Activated B cell treated with CpG ODN at 0.5 μM for 24 hours (primary cell): ENCODE measurements at regions of chr14 and their contacts with region 1.

Region 1: DNA sequence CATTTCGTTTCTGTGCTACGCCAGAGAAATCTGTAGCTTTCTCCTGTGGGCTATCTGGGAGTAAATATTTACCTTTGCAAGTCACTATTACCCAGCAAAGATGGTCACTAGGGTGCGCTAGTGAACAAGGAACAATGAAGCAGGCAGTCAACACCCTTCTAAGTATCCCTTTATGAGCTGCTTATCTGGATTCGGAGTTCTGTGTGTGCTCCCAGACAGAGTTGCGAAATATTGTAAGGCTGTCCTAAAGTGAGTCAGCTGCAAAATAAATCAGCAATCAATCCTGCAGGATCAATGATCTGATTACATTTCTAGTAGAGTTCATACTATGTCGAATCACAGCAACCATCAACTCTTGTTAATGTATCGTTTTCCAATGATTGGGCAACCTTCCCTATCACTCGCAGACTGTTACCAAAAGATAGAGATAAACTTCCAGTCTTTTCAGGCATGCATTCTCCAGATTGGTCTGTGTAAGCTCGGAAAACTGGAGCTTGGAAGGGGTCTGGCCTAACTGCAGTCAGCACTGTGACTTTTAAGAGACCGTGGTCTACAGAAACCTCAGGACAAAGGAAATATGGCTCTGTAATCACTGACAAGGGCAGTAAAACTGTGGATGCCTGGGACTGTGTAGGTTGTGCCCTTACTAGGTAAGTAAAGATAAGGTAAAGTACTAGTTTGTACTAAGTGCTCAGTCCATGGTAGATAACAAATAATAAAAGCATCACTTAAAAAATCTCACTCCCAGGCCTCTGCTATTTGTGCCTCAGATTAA is 133.5 kb downstream of the KCNK10 start:
- DNase-seq: no peak
- ATAC-seq: peak; percentile 71
- H3K4me3 Mint-ChIP-seq: peak overlapping the region; percentile 56
- H3K27ac Mint-ChIP-seq: no peak overlapping the region
- H3K4me1 Mint-ChIP-seq: peaks cover 7% of the 10 kb centered on the region
- H3K27me3 Mint-ChIP-seq: peaks cover 8% of the 10 kb centered on the region
- CTCF ChIP-seq: no peak

Region 2: GRCh38 chr14:88233915-88234314 is 44.3 kb after region 1 on chr14:
- CTCF ChIA-PET with region 1: interaction called, 63 read pairs
- POLR2A ChIA-PET with region 1: interaction called, 4 read pairs
- intact Hi-C with region 1: loop called (anchors 1 kb)
- DNase-seq: no peak
- ATAC-seq: no peak
- H3K4me3 Mint-ChIP-seq: no peak overlapping the region
- H3K27ac Mint-ChIP-seq: no peak overlapping the region
- H3K4me1 Mint-ChIP-seq: no peaks in the 10 kb centered on the region
- H3K27me3 Mint-ChIP-seq: peaks cover 11% of the 10 kb centered on the region
- CTCF ChIP-seq: no peak

Region 3: DNA sequence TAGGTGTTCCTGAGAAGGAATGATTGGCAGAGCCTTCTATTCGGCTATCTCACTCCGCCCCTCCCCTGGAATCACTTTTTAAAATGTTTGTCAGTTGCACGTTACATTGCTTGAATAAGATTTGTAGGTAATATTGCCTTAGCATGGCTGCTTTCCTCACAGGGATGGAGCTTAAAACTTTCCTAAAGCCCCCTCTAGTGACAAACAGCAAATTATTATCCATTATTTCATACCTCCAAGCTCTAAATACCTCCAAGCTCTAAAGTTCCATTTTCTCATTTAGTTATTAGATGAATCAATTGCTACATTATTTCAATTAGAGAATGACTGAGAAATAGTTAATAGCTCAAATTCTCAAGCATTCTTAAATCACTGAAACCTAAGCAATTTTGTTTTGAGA is 190.8 kb after region 1 on chr14:
- CTCF ChIA-PET with region 1: interaction called, 31 read pairs
- POLR2A ChIA-PET with region 1: no interaction called
- intact Hi-C with region 1: loop called (anchors 1 kb)
- DNase-seq: no peak
- ATAC-seq: no peak
- H3K4me3 Mint-ChIP-seq: no peak overlapping the region
- H3K27ac Mint-ChIP-seq: no peak overlapping the region
- H3K4me1 Mint-ChIP-seq: peaks cover 7% of the 10 kb centered on the region
- H3K27me3 Mint-ChIP-seq: peaks cover 2% of the 10 kb centered on the region
- CTCF ChIP-seq: no peak

Region 4: DNA sequence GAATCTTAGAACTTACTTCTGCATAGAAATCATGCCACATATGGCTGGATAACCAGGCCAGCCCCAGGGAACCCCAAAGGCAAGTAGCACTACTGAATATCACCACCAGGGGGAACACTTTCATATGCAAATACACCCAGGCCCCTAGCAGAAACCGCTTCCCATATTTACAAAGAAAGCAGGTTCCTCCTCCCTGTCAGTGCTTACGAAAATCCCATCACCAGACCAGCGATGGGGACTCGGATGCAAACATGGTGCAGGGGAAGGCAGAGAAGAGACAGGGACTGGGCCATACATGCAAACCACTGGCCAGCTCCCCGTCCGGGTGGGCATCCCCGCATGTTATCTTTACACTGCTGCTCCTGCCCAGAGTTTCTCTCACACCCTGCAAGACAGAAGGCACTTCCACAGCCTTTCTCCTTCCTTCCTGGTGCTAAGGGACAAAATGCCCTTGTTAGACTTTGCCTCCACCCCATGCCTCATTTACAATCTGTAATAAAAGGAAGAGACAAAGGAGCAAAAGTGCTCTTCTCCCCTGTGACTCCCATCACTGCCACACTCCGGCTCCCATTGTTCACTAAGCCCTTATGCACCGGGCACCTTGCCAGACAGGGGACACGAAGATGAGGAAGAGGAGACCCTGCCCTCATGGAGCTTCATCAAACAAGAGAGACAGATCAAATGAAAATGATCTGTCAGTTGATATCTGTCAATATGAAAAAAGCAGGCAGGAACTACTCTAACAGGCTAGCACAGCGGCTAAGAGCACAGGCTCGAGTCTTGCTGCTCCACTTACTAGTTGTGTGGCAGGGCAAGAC is 302.9 kb after region 1 on chr14:
- CTCF ChIA-PET with region 1: no interaction called
- POLR2A ChIA-PET with region 1: no interaction called
- intact Hi-C with region 1: loop called (anchors 10 kb)
- DNase-seq: peak; percentile 16
- ATAC-seq: peak; percentile 72
- H3K4me3 Mint-ChIP-seq: no peak overlapping the region
- H3K27ac Mint-ChIP-seq: no peak overlapping the region
- H3K4me1 Mint-ChIP-seq: peaks cover 2% of the 10 kb centered on the region
- H3K27me3 Mint-ChIP-seq: no peaks in the 10 kb centered on the region
- CTCF ChIP-seq: no peak